Activated naive CD4-positive, alpha-beta T cell treated with anti-CD3 and anti-CD28 coated beads for 36 hours (primary cell): ENCODE measurements at regions of chr2 and their contacts with region 1.

Region 1: GRCh38 chr2:207529330-207530159 is at the start of gene CREB1:
- DNase-seq: peak; percentile 100
- H3K4me3 Mint-ChIP-seq: peak within 1 kb of the TSS; percentile 98
- H3K27ac Mint-ChIP-seq: peak within 1 kb of the TSS; percentile 100
- H3K4me1 Mint-ChIP-seq: peaks cover 59% of the 10 kb centered on the region
- H3K27me3 Mint-ChIP-seq: no peaks in the 10 kb centered on the region
- total RNA-seq, gene CREB1: 93.7 to 97.7 TPM

Region 2: GRCh38 chr2:206765242-206766056 is 764.1 kb before region 1 on chr2 and contains the starts of genes FASTKD2 and MDH1B:
- CTCF ChIA-PET with region 1: no interaction called
- intact Hi-C with region 1: loop called (anchors 1 kb)
- DNase-seq: peak; percentile 91
- H3K4me3 Mint-ChIP-seq: peak within 1 kb of the TSS; percentile 89
- H3K27ac Mint-ChIP-seq: peak within 1 kb of the TSS; percentile 95
- H3K4me1 Mint-ChIP-seq: peaks cover 35% of the 10 kb centered on the region
- H3K27me3 Mint-ChIP-seq: no peaks in the 10 kb centered on the region
- total RNA-seq, gene FASTKD2: 21.4 to 22.8 TPM
- total RNA-seq, gene MDH1B: 0.86 TPM

Region 3: DNA sequence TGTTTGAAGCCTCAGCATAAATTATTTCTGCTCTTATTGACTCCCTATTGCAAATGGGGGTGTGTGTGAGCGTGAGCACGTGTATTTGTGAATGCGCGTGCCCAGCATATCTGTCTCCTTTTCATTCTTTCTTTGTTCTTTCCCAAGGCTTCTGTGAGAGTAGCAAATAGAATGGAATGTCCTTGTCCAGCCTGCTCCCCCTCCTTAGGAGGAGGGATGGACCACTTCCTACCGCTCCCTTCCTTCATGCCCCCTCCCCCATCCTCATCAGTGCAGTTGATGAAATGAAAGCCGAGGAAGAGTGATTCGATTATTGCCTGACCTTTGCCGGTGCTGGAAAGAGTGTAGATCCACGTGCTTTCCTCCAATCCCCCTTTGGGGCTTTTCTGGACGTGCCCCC is 488.3 kb before region 1 on chr2:
- CTCF ChIA-PET with region 1: no interaction called
- intact Hi-C with region 1: no loop called
- DNase-seq: no peak
- H3K4me3 Mint-ChIP-seq: no peak overlapping the region
- H3K27ac Mint-ChIP-seq: no peak overlapping the region
- H3K4me1 Mint-ChIP-seq: no peaks in the 10 kb centered on the region
- H3K27me3 Mint-ChIP-seq: peaks cover 4% of the 10 kb centered on the region

Region 4: GRCh38 chr2:207288628-207289027 is 240.9 kb before region 1 on chr2:
- CTCF ChIA-PET with region 1: no interaction called
- intact Hi-C with region 1: loop called (anchors 5 kb)
- DNase-seq: peak; percentile 84
- H3K4me3 Mint-ChIP-seq: no peak overlapping the region
- H3K27ac Mint-ChIP-seq: peak overlapping the region; percentile 33
- H3K4me1 Mint-ChIP-seq: peaks cover 73% of the 10 kb centered on the region
- H3K27me3 Mint-ChIP-seq: no peaks in the 10 kb centered on the region

Region 5: DNA sequence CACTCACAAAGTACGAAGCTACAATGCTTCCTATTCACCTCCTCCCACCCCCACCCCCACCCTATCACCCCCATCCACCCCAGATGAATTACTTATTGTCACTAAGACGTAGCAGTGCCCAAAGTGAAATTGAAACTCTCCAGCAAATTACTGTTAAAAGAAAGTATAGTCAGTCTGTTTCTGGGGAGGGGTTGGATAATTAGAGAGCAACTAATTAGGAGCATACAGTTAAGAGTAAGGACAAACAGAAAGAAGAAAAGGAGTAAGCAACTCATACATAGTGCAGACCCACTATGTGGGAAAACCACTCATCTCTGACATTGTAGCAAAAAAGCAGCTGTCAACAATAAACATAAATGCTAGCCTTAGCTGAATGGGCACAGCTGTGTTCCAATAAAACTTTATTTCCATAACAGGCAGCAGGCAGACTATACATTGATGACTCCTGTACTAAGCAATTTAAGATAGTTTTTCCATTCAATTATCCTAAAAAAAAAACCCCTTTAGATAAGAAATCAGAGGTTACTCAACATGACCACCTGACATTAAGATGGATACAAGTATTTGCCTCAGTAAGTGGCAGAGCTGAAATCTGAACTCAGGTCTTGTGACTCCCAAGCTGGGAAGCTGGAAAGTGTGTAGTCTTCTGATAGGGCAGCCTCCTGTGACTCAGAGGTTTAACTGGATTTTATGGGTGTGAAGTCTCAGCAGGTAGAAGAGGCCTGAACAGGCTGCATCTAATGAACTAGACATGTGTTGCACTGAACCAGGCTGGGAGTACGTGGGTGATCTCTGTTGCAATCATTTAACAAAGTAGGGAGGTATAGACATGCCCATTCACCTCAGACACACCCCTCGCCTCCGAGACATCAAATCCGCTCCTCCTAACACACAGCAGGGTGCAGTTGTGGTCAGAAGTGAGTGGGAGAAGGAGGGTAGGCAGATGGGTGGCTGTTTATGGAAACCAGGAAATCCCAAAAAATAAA is 192.0 kb before region 1 on chr2:
- CTCF ChIA-PET with region 1: no interaction called
- intact Hi-C with region 1: no loop called
- DNase-seq: peak; percentile 46
- H3K4me3 Mint-ChIP-seq: no peak overlapping the region
- H3K27ac Mint-ChIP-seq: peak overlapping the region; percentile 71
- H3K4me1 Mint-ChIP-seq: peaks cover 47% of the 10 kb centered on the region
- H3K27me3 Mint-ChIP-seq: no peaks in the 10 kb centered on the region

Region 6: GRCh38 chr2:207503234-207503633 is 26.3 kb before region 1 on chr2:
- CTCF ChIA-PET with region 1: interaction called, 8 read pairs
- intact Hi-C with region 1: loop called (anchors 1 kb)
- DNase-seq: no peak
- H3K4me3 Mint-ChIP-seq: no peak overlapping the region
- H3K27ac Mint-ChIP-seq: no peak overlapping the region
- H3K4me1 Mint-ChIP-seq: peaks cover 47% of the 10 kb centered on the region
- H3K27me3 Mint-ChIP-seq: no peaks in the 10 kb centered on the region

Region 7: DNA sequence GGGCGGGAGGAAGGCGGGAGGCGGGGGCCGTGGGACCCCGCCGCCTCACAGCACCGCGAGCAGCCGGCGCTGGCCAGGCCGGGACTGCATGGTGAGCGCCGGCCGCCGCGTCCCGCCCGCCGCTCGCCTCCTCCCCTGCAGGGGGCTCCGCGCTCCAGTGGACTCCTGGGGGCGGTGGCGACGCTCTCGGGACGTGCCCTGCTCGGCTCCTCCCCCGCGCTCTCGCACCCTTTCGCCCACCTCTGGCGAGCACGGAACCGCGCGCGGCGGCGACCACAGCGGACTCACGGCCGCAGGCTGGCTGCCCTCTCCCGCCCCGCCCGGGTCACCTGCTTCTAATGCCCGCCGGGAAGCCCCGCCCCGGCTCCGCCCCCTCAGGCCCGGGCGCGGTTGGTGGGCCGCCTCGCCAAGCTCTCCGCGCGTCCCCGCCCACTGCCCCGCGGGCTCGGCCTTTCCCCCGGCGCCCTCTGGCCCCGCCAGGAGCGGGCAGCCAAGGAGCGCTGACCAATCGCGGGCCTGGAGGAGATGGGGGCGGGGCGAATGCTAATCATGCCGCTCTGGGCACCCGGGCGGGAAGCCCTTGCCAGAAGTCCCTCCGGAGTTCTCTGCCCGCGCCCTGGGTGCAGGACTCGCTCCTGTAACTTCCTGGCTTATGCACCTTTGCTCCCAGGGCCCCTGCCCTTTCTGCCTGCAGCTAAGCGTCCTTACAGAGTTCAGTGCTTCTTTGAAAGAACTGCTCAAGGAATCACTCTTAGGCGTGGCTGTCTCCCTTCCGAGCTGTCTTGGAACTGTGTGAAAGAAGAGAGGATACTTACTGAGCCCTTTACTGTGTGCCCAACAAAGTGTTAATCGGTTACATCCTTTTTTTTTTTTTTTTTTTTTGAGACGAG is 240.3 kb after region 1 on chr2 and contains the start of gene FZD5:
- CTCF ChIA-PET with region 1: no interaction called
- intact Hi-C with region 1: loop called (anchors 5 kb)
- DNase-seq: peak; percentile 91
- H3K4me3 Mint-ChIP-seq: peak within 1 kb of the TSS; percentile 80
- H3K27ac Mint-ChIP-seq: no peak within 1 kb of the TSS
- H3K4me1 Mint-ChIP-seq: peaks cover 31% of the 10 kb centered on the region
- H3K27me3 Mint-ChIP-seq: peaks cover 36% of the 10 kb centered on the region
- total RNA-seq, gene FZD5: 1.5 to 1.7 TPM